Gastrocnemius medialis (tissue), 4 donors: ENCODE measurements at regions of chr19 and their contacts with region 1.

Region 1: GRCh38 chr19:44723952-44724319 is 24.6 kb upstream of the BCL3 start:
- DNase-seq: peak; percentile 67 to 82
- ATAC-seq: peak; percentile 89 to 94
- H3K4me3 ChIP-seq: no peak overlapping the region
- H3K27ac ChIP-seq: peak overlapping the region; percentile 19 to 64 (median 38)
- H3K4me1 ChIP-seq: peaks cover 14 to 21% of the 10 kb centered on the region in 2 donors
- H3K27me3 ChIP-seq: no peaks in the 10 kb centered on the region
- CTCF ChIP-seq: peak; percentile 97 to 100 (median 99)
- POLR2A ChIP-seq: no peak

Region 2: GRCh38 chr19:44757735-44758505 is 34.0 kb after region 1 on chr19:
- in situ Hi-C with region 1: no loop called
- intact Hi-C with region 1: loop called (anchors 1 kb)
- DNase-seq: peak; percentile 54 to 70
- ATAC-seq: peak; percentile 27 to 33
- H3K4me3 ChIP-seq: peak overlapping the region; percentile 50 to 54 (median 53)
- H3K27ac ChIP-seq: peak overlapping the region; percentile 86 to 96 (median 92)
- H3K4me1 ChIP-seq: peaks cover 37 to 46% of the 10 kb centered on the region in 2 donors
- H3K27me3 ChIP-seq: no peaks in the 10 kb centered on the region
- CTCF ChIP-seq: peak in 3 of 5 experiments; percentile 26 to 42 (median 29)
- POLR2A ChIP-seq: peak in 1 of 2 donors; percentile 27